ENCODE measurements at regions of chr14 and their contacts with region 1.

Region 1: DNA sequence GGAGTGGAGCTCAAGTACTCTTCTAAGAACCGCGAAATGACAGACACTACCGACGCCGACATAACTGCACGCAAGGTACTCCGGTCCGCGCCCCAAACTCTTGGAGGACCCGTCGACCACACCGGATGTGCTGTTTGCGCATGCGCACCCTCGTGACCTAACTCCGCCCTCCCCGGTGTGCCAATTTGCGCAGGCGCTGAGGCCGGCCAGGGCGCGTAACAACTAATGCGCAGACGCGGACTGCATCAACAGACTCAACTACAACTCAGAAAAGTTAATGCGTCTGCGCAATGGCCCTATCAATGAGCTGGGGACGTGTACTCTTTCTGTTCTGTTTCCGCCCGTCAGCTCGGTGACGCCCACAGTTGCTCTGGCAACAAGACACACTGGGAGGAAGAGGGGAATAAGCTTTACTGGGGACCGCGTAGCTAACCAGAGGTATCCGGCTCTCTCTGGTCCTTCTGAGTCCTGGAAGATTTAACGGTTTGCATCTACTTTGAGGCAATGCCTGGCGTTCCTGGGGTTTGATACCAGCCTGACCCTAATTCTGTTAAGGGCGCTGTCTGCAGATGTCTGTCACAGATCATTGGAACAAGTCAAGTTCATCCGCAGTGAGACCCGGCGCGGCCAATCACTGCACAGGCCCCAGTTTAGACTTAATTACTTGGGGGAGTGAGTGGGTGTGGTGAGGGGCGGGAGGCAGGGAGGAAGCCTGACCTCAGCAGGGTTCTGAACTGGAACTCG is at the start of gene DAD1:
- DNase-seq: peak; percentile 100
- H3K4me3 ChIP-seq: peak within 1 kb of the TSS; percentile 85 to 87
- H3K4me3 Mint-ChIP-seq: peak within 1 kb of the TSS; percentile 92 to 100 (median 97)
- H3K27ac ChIP-seq: peak within 1 kb of the TSS; percentile 88
- H3K27ac Mint-ChIP-seq: peak within 1 kb of the TSS; percentile 99 to 100 (median 99)
- H3K4me1 ChIP-seq: peaks cover 50% of the 10 kb centered on the region
- H3K4me1 Mint-ChIP-seq: peaks cover 39 to 63% (median 51%) of the 10 kb centered on the region in 4 donors
- H3K27me3 ChIP-seq: no peaks in the 10 kb centered on the region
- H3K27me3 Mint-ChIP-seq: peaks cover 2% of the 10 kb centered on the region in 2 donors
- total RNA-seq, gene DAD1: 110 to 124 TPM

Region 2: GRCh38 chr14:22510527-22511110 is 78.6 kb before region 1 on chr14:
- CTCF ChIA-PET with region 1: no interaction called
- POLR2A ChIA-PET with region 1: interaction called, 10 read pairs
- intact Hi-C with region 1: no loop called
- DNase-seq: no peak
- H3K4me3 ChIP-seq: peak overlapping the region in 1 of 2 donors; percentile 29
- H3K4me3 Mint-ChIP-seq: peak overlapping the region; percentile 76 to 92 (median 89)
- H3K27ac ChIP-seq: peak overlapping the region; percentile 76
- H3K27ac Mint-ChIP-seq: peak overlapping the region; percentile 95 to 100 (median 98)
- H3K4me1 ChIP-seq: peaks cover 99% of the 10 kb centered on the region
- H3K4me1 Mint-ChIP-seq: peaks cover 56 to 93% (median 72%) of the 10 kb centered on the region in 4 donors
- H3K27me3 ChIP-seq: no peaks in the 10 kb centered on the region
- H3K27me3 Mint-ChIP-seq: no peaks in the 10 kb centered on the region

Region 3: GRCh38 chr14:22549981-22550673 is 39.1 kb before region 1 on chr14:
- CTCF ChIA-PET with region 1: interaction called, 32 read pairs
- POLR2A ChIA-PET with region 1: interaction called, 387 read pairs
- intact Hi-C with region 1: no loop called
- DNase-seq: peak; percentile 58 to 96 (median 63)
- H3K4me3 ChIP-seq: peak overlapping the region; percentile 3 to 7
- H3K4me3 Mint-ChIP-seq: peak overlapping the region; percentile 64 to 91 (median 78)
- H3K27ac ChIP-seq: peak overlapping the region; percentile 97
- H3K27ac Mint-ChIP-seq: peak overlapping the region; percentile 97 to 100 (median 100)
- H3K4me1 ChIP-seq: peaks cover 99% of the 10 kb centered on the region
- H3K4me1 Mint-ChIP-seq: peaks cover 87 to 97% (median 93%) of the 10 kb centered on the region in 4 donors
- H3K27me3 ChIP-seq: no peaks in the 10 kb centered on the region
- H3K27me3 Mint-ChIP-seq: no peaks in the 10 kb centered on the region

Region 4: DNA sequence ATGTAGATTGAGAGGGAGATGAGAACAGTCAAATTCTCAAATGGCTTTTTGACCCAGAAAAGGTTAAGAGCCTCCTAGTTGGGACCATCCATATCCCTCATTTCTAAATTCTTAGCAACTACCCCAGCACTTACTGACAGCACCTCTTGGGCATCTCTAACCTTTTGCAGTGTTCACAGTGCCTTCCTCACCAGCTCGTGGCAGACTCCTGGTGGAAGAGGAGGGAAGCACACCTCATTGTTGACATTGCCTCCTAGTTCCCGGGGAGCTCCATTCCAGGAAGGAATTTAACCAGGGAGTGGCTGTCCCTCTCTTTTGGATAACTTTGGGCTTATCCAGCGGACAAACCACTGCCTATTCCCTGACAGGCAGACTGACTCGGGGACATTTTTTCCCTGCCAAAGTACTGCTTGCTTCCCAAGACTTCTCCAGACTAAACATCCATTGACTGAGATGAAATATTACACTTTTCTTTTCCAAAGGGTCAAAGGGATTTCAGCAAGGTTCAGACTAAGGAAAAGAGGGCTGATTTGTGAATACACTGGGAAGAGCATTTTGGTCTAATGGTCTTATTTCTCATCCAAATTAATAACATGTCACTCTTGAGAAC is 63.8 kb after region 1 on chr14:
- CTCF ChIA-PET with region 1: interaction called, 7 read pairs
- POLR2A ChIA-PET with region 1: no interaction called
- intact Hi-C with region 1: loop called (anchors 5 kb)
- DNase-seq: peak; percentile 35 to 48 (median 43)
- H3K4me3 ChIP-seq: no peak overlapping the region
- H3K4me3 Mint-ChIP-seq: no peak overlapping the region
- H3K27ac ChIP-seq: no peak overlapping the region
- H3K27ac Mint-ChIP-seq: peak overlapping the region in 1 of 7 donors; percentile 10
- H3K4me1 ChIP-seq: no peaks in the 10 kb centered on the region
- H3K4me1 Mint-ChIP-seq: no peaks in the 10 kb centered on the region
- H3K27me3 ChIP-seq: no peaks in the 10 kb centered on the region
- H3K27me3 Mint-ChIP-seq: no peaks in the 10 kb centered on the region

Region 5: GRCh38 chr14:22766456-22767322 is 177.4 kb after region 1 on chr14 and contains the start of gene OXA1L:
- CTCF ChIA-PET with region 1: interaction called, 3 read pairs
- POLR2A ChIA-PET with region 1: interaction called, 32 read pairs
- intact Hi-C with region 1: loop called (anchors 1 kb)
- DNase-seq: peak; percentile 95 to 98 (median 98)
- H3K4me3 ChIP-seq: peak within 1 kb of the TSS; percentile 62 to 88
- H3K4me3 Mint-ChIP-seq: peak within 1 kb of the TSS; percentile 85 to 96 (median 94)
- H3K27ac ChIP-seq: peak within 1 kb of the TSS; percentile 88
- H3K27ac Mint-ChIP-seq: peak within 1 kb of the TSS; percentile 86 to 100 (median 98)
- H3K4me1 ChIP-seq: peaks cover 24% of the 10 kb centered on the region
- H3K4me1 Mint-ChIP-seq: peaks cover 26 to 39% (median 34%) of the 10 kb centered on the region in 4 donors
- H3K27me3 ChIP-seq: no peaks in the 10 kb centered on the region
- H3K27me3 Mint-ChIP-seq: no peaks in the 10 kb centered on the region
- total RNA-seq, gene OXA1L: 129 to 137 TPM

Region 6: GRCh38 chr14:22872033-22872832 is 283.0 kb after region 1 on chr14:
- CTCF ChIA-PET with region 1: interaction called, 4 read pairs
- POLR2A ChIA-PET with region 1: interaction called, 12 read pairs
- intact Hi-C with region 1: loop called (anchors 5 kb)
- DNase-seq: peak; percentile 66 to 78 (median 73)
- H3K4me3 ChIP-seq: peak overlapping the region; percentile 24 to 55
- H3K4me3 Mint-ChIP-seq: peak overlapping the region; percentile 88 to 98 (median 97)
- H3K27ac ChIP-seq: peak overlapping the region; percentile 79
- H3K27ac Mint-ChIP-seq: peak overlapping the region; percentile 72 to 100 (median 89)
- H3K4me1 ChIP-seq: peaks cover 48% of the 10 kb centered on the region
- H3K4me1 Mint-ChIP-seq: peaks cover 17 to 46% (median 33%) of the 10 kb centered on the region in 4 donors
- H3K27me3 ChIP-seq: no peaks in the 10 kb centered on the region
- H3K27me3 Mint-ChIP-seq: no peaks in the 10 kb centered on the region

Measured in CD4-positive, alpha-beta memory T cell (primary cell).